ENCODE measurements at regions of chr13 and their contacts with region 1.

Region 1: DNA sequence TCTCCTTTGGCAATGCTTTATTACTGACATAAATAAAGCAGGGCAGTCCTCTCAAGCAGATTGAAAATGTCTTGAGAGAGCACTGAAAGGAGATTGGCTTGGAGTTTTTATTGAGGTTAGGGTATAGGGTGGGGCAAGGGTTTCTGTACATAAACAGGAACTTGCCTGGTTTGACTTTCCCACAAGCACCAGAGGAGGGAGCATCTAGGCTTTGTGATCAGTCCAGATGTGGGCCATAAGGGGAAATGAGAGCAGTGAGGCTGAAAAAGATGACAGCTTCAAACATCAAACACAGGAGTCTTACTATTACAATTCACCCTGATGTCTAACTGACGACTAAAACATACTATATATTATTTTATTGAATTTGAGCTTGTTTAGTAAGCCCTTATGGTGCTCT is 260.9 kb downstream of the MTUS2 start:
- DNase-seq: no peak
- ATAC-seq: peak in 2 of 8 donors; percentile 31 to 59
- H3K4me3 ChIP-seq: no peak overlapping the region
- H3K27ac ChIP-seq: no peak overlapping the region
- H3K4me1 ChIP-seq: peaks cover 0 to 7% (median 0%) of the 10 kb centered on the region in 9 donors
- H3K27me3 ChIP-seq: no peaks in the 10 kb centered on the region
- CTCF ChIP-seq: peak in 1 of 9 donors; percentile 21

Region 2: DNA sequence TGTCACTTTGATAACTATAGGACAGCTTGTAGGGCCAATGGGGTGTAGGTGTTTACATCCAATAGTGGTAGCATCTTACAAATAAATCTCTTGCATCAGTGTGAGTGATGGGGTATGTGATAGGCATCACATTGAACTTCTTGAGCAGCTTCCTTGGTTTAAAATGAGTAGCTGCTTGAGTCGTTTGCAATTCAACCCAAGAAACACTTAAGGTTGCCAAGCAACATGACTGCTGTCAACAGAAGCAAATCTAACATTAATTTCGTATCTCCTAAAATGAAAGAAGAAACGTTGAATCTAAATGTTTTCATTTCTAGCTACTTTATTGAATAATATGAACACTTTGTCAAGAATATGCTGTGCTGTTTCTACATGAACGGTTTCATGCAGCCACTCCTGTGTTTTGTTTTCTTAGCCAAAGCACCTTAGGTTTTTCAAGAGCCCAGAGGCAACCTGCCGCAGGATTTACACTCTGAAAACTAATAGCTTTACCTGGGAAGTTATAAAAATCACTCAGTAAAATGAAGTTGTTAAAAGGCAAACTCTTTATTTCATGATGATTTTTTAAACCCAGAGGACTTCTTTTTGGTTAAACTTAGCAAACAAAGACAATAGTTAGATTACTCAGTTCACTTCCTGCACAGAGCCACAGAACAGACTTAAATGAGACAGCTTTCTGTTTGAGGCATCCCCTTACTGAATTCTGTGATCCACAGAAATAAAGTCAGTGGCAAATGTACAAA is 44.3 kb after region 1 on chr13:
- intact Hi-C with region 1: no loop called
- DNase-seq: no peak
- ATAC-seq: no peak
- H3K4me3 ChIP-seq: no peak overlapping the region
- H3K27ac ChIP-seq: no peak overlapping the region
- H3K4me1 ChIP-seq: no peaks in the 10 kb centered on the region
- H3K27me3 ChIP-seq: no peaks in the 10 kb centered on the region
- CTCF ChIP-seq: no peak

Region 3: DNA sequence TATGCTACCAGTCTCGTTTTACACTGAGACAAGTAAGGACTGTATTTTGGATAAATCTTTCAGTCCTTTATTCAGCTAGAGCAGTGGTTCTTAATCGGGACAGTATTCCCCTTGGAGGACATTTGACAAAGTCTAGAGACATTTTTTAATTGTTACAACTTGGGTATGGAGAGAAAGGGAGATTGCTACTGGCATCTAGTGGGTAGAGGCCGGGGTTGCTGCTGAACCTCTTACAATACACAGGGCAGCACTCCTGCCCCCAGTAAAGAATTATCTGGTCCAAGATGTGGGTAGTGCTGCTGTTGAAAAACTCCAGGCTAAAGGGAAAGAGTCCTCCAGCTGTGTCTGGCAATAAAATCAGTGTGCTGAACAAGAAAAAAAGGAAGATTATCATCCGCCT is 179.6 kb after region 1 on chr13:
- intact Hi-C with region 1: loop called in 1 of 10 experiments (anchors 10 kb)
- DNase-seq: no peak
- ATAC-seq: peak in 7 of 8 donors; percentile 29 to 82 (median 75)
- H3K4me3 ChIP-seq: no peak overlapping the region
- H3K27ac ChIP-seq: no peak overlapping the region
- H3K4me1 ChIP-seq: peaks cover 0 to 7% (median 0%) of the 10 kb centered on the region in 9 donors
- H3K27me3 ChIP-seq: peaks cover 0 to 3% (median 0%) of the 10 kb centered on the region in 7 donors
- CTCF ChIP-seq: peak in 8 of 9 donors; percentile 6 to 58 (median 44)